ENCODE measurements at regions of chr10 and their contacts with region 1.

Region 1: DNA sequence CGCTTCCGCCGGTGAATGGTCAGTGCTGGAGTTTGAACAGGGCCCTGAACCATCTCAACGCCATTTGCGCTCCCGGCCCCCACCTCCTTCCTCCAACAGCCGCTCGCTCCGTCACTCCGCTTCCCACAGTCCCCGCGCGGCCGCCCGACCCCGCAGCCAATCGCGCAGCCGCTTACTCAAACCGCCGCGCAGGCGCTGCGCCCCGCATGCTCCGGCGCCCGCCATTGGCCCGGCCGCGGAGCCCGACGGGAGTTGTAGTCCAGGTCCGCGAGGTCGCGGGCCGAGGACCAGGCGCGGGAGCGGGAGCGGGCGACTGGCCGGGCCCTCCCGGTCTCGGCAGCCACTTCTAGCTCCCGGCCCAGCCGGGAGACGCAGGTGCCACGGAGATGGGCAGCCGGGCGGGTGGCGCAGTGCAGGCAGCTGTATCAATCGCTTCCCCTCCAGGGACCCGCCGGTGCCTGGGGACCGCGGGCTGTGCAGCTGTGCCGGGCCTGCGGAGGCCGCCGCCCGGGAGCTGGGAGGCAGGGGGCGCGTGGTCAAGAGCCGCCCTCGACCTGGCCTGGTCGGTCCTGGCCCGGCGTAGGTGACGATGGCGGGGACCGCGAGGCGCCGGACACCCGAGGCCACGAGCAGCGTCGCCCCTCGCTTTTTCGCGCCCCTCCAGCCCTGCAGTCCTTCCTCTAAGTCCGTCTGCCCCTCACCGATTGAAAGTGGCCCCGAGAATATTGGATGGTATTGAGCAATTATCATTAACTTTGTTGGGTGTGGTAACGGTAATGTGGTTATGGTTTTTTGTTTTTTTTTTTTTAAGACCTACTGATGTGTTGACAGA is at the start of gene WAPL:
- DNase-seq: peak; percentile 95
- H3K4me3 Mint-ChIP-seq: peak within 1 kb of the TSS; percentile 99
- H3K27ac Mint-ChIP-seq: peak within 1 kb of the TSS; percentile 98
- H3K4me1 Mint-ChIP-seq: peaks cover 68% of the 10 kb centered on the region
- H3K27me3 Mint-ChIP-seq: no peaks in the 10 kb centered on the region
- total RNA-seq, gene WAPL: 49.7 and 50.2 TPM in 2 replicates

Region 2: DNA sequence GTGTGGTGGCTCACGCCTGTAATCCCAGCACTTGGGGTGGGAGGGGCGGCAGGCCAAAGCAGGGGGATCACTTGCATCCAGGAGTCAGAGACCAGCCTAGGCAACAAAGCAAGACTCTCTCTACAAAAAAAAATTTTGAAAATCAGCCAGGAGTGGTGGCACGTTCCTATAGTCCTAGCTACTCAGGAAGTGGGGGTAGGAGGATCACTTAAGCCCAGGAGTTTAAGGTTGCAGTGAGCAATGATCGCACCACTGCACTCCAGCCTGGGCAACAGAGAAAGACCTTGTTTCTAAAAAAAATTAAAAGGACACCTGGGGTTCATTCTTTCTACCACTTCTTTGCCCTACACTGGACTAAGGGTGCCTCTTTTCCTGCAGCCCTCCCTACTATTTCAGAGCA is 15.4 kb before region 1 on chr10:
- intact Hi-C with region 1: loop called (anchors 1 kb)
- DNase-seq: no peak
- H3K4me3 Mint-ChIP-seq: no peak overlapping the region
- H3K27ac Mint-ChIP-seq: no peak overlapping the region
- H3K4me1 Mint-ChIP-seq: peaks cover 10% of the 10 kb centered on the region
- H3K27me3 Mint-ChIP-seq: no peaks in the 10 kb centered on the region

Region 3: GRCh38 chr10:86585037-86585725 is 63.3 kb after region 1 on chr10:
- intact Hi-C with region 1: loop called (anchors 1 kb)
- DNase-seq: peak; percentile 67
- H3K4me3 Mint-ChIP-seq: no peak overlapping the region
- H3K27ac Mint-ChIP-seq: no peak overlapping the region
- H3K4me1 Mint-ChIP-seq: no peaks in the 10 kb centered on the region
- H3K27me3 Mint-ChIP-seq: no peaks in the 10 kb centered on the region

Region 4: DNA sequence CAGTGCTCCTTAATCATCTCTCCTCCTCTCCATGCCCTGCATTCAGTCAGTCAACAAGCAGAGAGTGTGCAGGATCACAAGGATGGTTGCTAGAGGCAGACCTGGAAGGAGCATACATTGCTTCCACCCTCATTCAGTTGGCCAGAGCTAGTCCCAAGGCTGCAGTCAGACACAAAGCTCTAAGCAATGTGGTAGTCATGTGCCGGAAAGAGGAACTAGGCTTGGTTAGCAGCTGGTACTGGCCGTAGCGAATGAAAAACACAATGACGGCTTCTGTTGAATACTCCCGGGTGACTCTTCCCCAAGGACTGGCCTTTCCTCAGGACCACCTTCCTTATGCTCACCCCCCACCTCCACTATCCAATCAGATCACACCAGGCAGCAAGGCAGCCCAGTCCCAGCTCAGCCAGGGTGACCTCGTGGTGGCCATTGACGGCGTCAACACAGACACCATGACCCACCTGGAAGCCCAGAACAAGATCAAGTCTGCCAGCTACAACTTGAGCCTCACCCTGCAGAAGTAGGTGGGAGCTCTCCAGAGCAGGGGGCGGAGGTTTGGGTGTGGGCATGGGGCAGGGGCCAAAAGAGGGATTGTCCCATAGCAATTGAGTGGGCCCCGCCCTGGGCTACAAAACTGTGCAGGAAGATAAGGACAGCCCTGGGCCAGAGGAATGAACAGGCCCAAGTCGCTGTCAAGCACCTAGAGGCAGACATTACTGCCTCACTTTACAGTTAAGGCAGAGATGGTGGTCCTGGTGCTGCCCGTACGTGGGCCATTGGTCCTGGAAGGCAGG is 157.3 kb after region 1 on chr10:
- intact Hi-C with region 1: no loop called
- DNase-seq: no peak
- H3K4me3 Mint-ChIP-seq: no peak overlapping the region
- H3K27ac Mint-ChIP-seq: no peak overlapping the region
- H3K4me1 Mint-ChIP-seq: no peaks in the 10 kb centered on the region
- H3K27me3 Mint-ChIP-seq: peaks cover 4% of the 10 kb centered on the region

Region 5: DNA sequence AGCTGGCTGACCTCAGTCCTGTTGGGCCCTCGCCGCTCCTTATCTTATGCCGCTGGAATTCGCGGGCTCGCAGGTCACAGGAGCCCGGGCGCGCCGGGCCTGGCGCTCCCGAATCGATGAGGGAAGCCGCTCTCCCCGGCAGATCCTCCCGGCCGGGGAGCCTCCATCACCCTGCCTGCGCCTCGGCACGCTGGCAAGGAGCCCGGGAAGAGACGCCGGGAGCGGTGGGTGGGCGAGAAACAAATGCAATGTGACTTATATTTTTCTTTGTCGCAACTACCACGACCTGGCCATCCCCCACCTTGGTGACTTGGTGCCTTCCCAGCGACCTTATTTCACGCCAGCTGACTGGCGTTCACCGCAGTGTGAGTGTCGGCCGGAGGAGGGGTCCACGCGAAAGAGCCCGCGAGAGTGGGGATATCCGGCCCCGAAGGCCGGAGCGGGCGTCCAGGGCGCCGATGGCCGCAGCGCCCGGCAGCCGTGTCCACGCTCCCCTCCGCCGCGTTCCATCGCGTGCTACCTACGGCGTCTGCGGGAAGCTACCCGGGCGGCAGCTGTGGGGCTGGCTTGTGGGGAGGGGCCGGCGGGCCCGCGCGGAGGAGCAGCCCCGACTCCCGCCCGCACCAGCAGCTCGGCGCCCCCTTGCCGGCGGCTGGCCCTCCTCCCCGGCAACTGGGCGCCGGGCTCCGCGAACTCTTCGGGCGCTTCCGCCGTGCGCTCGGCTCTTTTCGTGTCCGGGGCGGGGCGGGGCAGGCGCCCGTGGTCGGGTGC is 234.0 kb after region 1 on chr10:
- intact Hi-C with region 1: loop called (anchors 2 kb)
- DNase-seq: peak; percentile 86
- H3K4me3 Mint-ChIP-seq: peak overlapping the region; percentile 86
- H3K27ac Mint-ChIP-seq: peak overlapping the region; percentile 86
- H3K4me1 Mint-ChIP-seq: peaks cover 52% of the 10 kb centered on the region
- H3K27me3 Mint-ChIP-seq: peaks cover 38% of the 10 kb centered on the region

Region 6: DNA sequence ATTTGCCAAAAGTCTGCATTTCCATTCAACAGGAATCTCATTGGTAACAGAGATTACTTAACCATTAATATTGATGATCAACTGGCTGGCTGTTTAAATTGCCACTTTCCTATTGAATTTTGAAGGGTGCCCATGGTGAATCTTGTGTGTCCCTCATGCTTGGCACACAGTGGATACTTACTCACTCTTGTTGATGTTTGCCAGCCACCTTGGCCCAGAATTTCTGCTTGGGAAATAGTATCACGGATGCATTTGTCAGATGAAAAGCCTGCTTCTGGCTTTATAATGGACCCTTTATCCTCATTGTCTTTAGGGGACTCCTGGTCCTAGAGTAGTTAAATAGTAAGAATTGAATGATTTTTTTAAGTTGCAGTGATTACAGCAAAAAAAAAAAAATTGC is 383.5 kb after region 1 on chr10:
- intact Hi-C with region 1: no loop called
- DNase-seq: no peak
- H3K4me3 Mint-ChIP-seq: no peak overlapping the region
- H3K27ac Mint-ChIP-seq: no peak overlapping the region
- H3K4me1 Mint-ChIP-seq: no peaks in the 10 kb centered on the region
- H3K27me3 Mint-ChIP-seq: no peaks in the 10 kb centered on the region